HCT116 (cell line): ENCODE measurements at regions of chr6 and their contacts with region 1.

Region 1: DNA sequence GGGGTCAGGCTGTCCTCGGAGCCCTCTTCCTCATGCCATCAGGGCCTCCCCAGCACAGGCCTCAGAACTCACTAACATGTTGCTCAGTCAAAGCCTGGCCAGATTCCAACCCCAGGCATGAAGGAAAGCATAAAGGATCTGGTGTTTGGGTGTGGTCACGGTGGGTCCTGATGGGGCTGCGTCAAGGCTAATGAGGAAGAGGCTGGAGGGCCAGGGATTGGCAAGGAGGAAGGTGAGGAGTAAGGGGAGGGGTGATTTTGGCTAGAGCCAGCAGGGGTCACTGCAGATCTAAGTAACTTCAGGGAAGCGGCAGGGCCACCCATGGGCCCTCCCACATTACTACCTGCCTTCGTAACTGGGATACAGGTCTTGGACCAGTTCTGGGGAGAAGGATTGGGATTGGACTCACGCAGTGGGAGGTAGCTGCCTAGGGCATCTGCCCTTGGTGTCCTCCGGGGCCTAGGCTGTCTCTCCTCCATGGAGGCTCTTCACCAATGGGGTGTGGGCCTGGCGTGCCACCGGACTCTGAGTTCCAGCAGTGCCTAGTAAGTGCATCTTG is 36.2 kb upstream of the MRPS18A start:
- DNase-seq: peak; percentile 79
- ATAC-seq: peak; percentile 96
- H3K4me3 ChIP-seq: no peak overlapping the region
- H3K27ac ChIP-seq: no peak overlapping the region
- H3K4me1 ChIP-seq: peaks cover 23 to 27% of the 10 kb centered on the region in 2 experiments
- H3K27me3 ChIP-seq: no peaks in the 10 kb centered on the region
- CTCF ChIP-seq: peak; percentile 67 to 80 (median 77)
- POLR2A ChIP-seq: no peak
- RAD21 ChIP-seq: peak; percentile 86

Region 2: DNA sequence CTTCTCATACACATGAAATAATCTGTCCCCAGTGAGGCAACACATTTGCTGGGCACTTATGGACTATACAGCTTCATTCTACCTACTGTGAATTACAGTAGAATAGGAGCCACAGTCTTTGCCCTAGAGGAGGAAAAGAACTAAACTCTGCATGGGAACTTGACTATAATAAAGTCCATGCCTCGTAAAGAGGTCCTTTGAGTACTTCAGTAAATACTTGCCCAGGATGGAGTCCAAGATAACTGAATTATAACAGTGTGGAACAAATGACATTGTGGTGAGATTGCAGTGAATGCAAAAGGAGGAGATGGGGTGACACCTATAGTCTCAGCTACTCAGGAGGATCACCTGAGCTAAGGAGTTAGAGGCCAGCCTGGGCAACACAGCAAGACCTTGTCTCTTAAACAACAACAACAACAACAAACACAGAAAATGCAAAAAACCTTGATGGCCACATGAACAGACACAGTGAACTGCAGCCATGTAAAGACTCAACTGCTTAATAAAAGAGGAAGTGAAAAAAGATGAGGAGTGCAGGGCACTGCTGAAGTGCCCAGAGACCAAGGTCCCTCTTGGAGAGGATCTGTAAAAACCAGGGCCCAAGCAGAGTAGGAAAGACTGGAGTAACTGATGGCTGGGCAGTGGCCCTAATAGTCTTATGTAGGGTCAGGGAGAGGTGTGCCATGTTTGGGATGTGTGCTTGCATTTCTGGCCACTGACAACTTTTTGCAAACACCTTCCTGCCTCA is 39.9 kb before region 1 on chr6:
- CTCF ChIA-PET with region 1: no interaction called
- POLR2A ChIA-PET with region 1: no interaction called
- RAD21 ChIA-PET with region 1: no interaction called
- intact Hi-C with region 1: no loop called
- DNase-seq: no peak
- ATAC-seq: no peak
- H3K4me3 ChIP-seq: no peak overlapping the region
- H3K27ac ChIP-seq: no peak overlapping the region
- H3K4me1 ChIP-seq: peaks cover 10 to 18% of the 10 kb centered on the region in 2 experiments; a peak in 3 of 4 replicates
- H3K27me3 ChIP-seq: no peaks in the 10 kb centered on the region
- CTCF ChIP-seq: no peak
- POLR2A ChIP-seq: no peak
- RAD21 ChIP-seq: no peak

Region 3: DNA sequence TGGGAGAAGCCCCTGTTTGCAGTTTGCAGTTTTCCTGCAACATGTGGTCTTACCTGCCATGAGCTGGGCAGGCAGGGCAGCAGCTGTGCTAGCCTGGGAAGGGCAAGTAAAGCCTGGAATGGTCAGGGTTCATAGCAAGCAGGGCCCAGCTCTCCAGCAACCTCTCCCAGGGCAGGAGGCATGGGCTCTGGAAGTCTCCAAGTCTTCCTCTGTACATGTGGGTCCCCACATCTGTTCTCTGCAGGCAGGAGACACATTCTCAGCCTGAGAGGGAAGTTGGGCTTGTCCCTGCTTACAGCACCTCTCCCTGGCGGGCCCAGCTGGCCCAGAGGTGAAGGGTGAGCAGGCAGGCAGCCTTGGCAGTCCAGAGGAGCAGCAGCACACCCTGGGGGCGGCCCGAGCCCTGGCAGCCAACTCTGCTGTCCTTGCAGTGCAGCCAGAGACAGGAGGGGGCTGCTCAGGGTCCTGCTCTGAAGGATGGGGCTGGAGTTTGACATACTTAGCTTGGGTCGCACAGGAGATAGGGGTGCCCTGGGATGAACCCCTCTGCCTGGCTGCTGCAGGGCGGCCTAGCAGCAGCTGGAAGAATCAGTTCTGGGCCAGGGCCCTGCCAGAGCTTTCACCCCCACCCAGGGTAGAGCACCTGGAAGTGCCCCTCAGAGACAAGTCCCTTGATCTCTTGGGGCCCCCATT is 227.4 kb after region 1 on chr6:
- CTCF ChIA-PET with region 1: no interaction called
- POLR2A ChIA-PET with region 1: no interaction called
- RAD21 ChIA-PET with region 1: no interaction called
- intact Hi-C with region 1: loop called (anchors 2 kb)
- DNase-seq: peak; percentile 10
- ATAC-seq: peak; percentile 66; the same call in 1 of the 2 replicates
- H3K4me3 ChIP-seq: no peak overlapping the region
- H3K27ac ChIP-seq: no peak overlapping the region
- H3K4me1 ChIP-seq: no peaks in the 10 kb centered on the region
- H3K27me3 ChIP-seq: no peaks in the 10 kb centered on the region
- CTCF ChIP-seq: peak; percentile 41 to 85 (median 43)
- POLR2A ChIP-seq: no peak
- RAD21 ChIP-seq: peak; percentile 87